Gastrocnemius medialis (tissue), 4 donors: ENCODE measurements at regions of chr13 and their contacts with region 1.

Region 1: GRCh38 chr13:46571189-46571908 is 18.4 kb downstream of the LRCH1 start:
- DNase-seq: no peak
- ATAC-seq: peak in 1 of 2 donors; percentile 46
- H3K4me3 ChIP-seq: no peak overlapping the region
- H3K27ac ChIP-seq: no peak overlapping the region
- H3K4me1 ChIP-seq: peaks cover 36 to 37% of the 10 kb centered on the region in 2 donors
- H3K27me3 ChIP-seq: no peaks in the 10 kb centered on the region
- CTCF ChIP-seq: no peak
- POLR2A ChIP-seq: no peak

Region 2: GRCh38 chr13:46639033-46639981 is 68.0 kb after region 1 on chr13:
- in situ Hi-C with region 1: no loop called
- intact Hi-C with region 1: loop called (anchors 10 kb)
- DNase-seq: no peak
- ATAC-seq: no peak
- H3K4me3 ChIP-seq: no peak overlapping the region
- H3K27ac ChIP-seq: peak overlapping the region in 1 of 4 donors; percentile 12
- H3K4me1 ChIP-seq: peaks cover 31 to 39% of the 10 kb centered on the region in 2 donors
- H3K27me3 ChIP-seq: no peaks in the 10 kb centered on the region
- CTCF ChIP-seq: no peak
- POLR2A ChIP-seq: no peak

Region 3: GRCh38 chr13:47661076-47661475 is 1089.7 kb after region 1 on chr13:
- in situ Hi-C with region 1: no loop called
- intact Hi-C with region 1: no loop called
- DNase-seq: no peak
- ATAC-seq: no peak
- H3K4me3 ChIP-seq: no peak overlapping the region
- H3K27ac ChIP-seq: no peak overlapping the region
- H3K4me1 ChIP-seq: no peaks in the 10 kb centered on the region
- H3K27me3 ChIP-seq: no peaks in the 10 kb centered on the region
- CTCF ChIP-seq: no peak
- POLR2A ChIP-seq: no peak